Esophagus muscularis mucosa (tissue), 4 donors: ENCODE measurements at regions of chr9 and their contacts with region 1.

Region 1: DNA sequence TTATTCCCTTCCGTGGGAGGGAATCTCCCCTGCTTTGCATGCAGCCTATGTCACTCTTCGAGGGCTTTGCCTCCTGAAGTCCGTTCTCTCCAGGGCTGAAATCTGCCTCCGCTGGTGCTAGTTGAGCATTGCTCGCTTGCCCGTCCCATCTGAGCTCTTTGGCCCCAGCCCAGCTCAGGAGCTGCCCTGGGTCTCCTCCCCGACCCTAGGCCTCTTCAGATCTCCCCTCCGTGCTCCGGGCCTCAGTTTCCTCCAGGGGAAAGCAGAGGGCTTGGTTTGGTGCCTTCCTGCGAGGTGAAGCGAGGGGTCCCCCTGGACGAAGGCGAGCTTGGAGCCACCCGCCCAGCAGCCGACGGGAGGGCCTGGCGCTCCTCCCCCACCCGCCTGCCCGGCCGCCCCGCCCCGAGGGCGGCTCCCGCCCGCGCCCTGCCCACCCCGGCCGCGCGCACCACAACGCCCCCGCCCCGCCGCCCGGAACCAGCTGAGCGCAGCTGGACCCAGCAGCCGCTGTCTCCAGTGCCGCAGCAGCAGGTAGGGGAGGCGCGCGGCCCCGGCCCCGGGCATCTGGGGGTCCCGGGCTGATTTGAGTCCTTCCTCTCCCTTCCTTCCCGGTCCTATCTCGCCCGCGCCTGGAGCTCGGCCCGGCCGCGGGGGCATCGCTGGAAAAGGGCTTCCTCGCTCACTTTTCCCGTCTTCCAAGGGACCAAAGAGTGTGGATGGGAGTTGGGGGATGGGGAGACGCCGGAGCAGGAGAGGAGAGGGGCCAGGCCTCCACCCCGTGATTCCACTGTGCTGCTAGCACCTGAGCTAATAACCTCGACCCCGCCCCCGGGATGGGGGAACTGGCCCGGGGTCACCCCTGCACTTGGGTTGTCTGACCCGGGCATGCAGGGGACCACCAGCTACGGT is at the start of gene GSN:
- DNase-seq: no peak
- H3K4me3 ChIP-seq: peak within 1 kb of the TSS; percentile 79 to 94 (median 88)
- H3K27ac ChIP-seq: peak within 1 kb of the TSS; percentile 94 to 99 (median 96)
- H3K4me1 ChIP-seq: peaks cover 54 to 67% (median 64%) of the 10 kb centered on the region in 4 donors
- H3K27me3 ChIP-seq: no peaks in the 10 kb centered on the region
- CTCF ChIP-seq: peak in 1 of 3 experiments; percentile 34
- EP300 ChIP-seq: no peak
- POLR2A ChIP-seq: peak; percentile 67
- total RNA-seq, gene GSN: 2,509 to 3,811 (median 3,170) TPM

Region 2: GRCh38 chr9:120936011-120936763 is 331.8 kb before region 1 on chr9:
- intact Hi-C with region 1: no loop called
- DNase-seq: peak; percentile 99
- H3K4me3 ChIP-seq: peak overlapping the region; percentile 32 to 44 (median 37)
- H3K27ac ChIP-seq: peak overlapping the region; percentile 87 to 91 (median 90)
- H3K4me1 ChIP-seq: peaks cover 40 to 90% (median 76%) of the 10 kb centered on the region in 4 donors
- H3K27me3 ChIP-seq: no peaks in the 10 kb centered on the region
- CTCF ChIP-seq: peak; percentile 91 to 95 (median 95)
- EP300 ChIP-seq: no peak
- POLR2A ChIP-seq: no peak

Region 3: GRCh38 chr9:121201738-121202533 is 66.0 kb before region 1 on chr9 and contains the start of gene RAB14:
- intact Hi-C with region 1: no loop called
- DNase-seq: peak; percentile 100
- H3K4me3 ChIP-seq: peak within 1 kb of the TSS; percentile 92 to 97 (median 96)
- H3K27ac ChIP-seq: peak within 1 kb of the TSS; percentile 92 to 96 (median 94)
- H3K4me1 ChIP-seq: peaks cover 36 to 47% (median 44%) of the 10 kb centered on the region in 4 donors
- H3K27me3 ChIP-seq: no peaks in the 10 kb centered on the region
- CTCF ChIP-seq: peak; percentile 37 to 64 (median 58)
- EP300 ChIP-seq: no peak
- POLR2A ChIP-seq: no peak
- total RNA-seq, gene RAB14: 28.5 to 30.7 (median 29.5) TPM

Region 4: DNA sequence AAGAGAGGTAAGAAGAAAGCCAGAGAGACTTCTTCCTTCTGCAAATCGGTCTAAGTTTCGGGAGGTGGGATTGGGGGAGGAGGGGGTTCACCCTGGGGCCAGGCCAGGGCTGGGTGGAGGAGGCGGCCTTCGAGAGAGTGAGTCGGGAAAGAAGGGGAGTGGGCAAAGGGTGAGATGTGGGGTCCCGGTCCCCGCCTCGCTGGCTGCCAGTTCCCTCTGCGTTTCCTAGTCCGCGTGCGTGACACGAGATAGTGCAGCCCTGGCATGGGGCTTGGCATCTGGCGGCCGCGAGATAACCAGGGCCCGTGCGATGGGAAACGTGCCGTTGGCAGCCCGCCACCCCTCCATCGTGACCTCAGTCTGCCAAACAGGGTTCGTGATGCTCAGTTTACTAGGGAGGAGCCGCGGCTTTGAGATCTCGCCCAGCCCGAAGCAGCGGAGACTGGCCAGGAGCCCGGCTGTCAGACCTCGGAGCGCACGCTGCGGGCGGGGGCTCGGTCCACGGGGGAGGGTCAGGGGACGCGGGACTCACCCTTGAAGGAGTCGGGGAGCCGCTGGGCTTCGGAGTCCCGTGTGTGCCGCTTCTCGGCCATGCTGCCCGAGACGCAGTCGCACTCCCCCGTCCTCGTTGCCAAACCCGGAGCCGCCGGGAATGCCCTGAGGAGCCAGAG is 101.8 kb after region 1 on chr9 and contains the start of gene STOM:
- intact Hi-C with region 1: loop called (anchors 5 kb)
- DNase-seq: peak; percentile 97
- H3K4me3 ChIP-seq: peak within 1 kb of the TSS; percentile 74 to 87 (median 82)
- H3K27ac ChIP-seq: peak within 1 kb of the TSS; percentile 94 to 97 (median 96)
- H3K4me1 ChIP-seq: peaks cover 54 to 84% (median 77%) of the 10 kb centered on the region in 4 donors
- H3K27me3 ChIP-seq: no peaks in the 10 kb centered on the region
- CTCF ChIP-seq: peak in 1 of 3 experiments; percentile 6
- EP300 ChIP-seq: no peak
- POLR2A ChIP-seq: peak; percentile 99
- total RNA-seq, gene STOM: 250 to 554 (median 444) TPM

Region 5: DNA sequence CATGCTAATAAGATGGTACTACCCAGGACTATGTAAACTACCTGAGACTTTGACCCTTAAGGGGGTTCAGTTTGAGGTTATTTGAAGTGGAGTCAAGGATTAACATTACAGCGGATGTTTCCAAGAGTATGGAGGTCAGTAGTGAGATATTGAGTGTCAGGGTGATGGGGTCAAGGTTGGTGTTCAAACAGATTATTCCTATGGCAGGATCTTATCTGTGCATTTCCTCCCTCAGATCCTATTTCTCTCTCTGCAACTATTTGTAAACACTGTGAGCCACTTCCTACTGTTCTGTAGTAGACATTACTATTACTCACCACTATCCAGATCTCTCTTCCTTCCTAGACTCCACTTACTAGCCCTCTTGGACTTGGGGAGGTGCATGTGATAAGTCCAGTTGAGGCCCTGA is 156.1 kb after region 1 on chr9:
- intact Hi-C with region 1: no loop called
- DNase-seq: no peak
- H3K4me3 ChIP-seq: no peak overlapping the region
- H3K27ac ChIP-seq: no peak overlapping the region
- H3K4me1 ChIP-seq: no peaks in the 10 kb centered on the region
- H3K27me3 ChIP-seq: no peaks in the 10 kb centered on the region
- CTCF ChIP-seq: no peak
- EP300 ChIP-seq: no peak
- POLR2A ChIP-seq: no peak

Region 6: GRCh38 chr9:121498150-121498486 is 230.2 kb after region 1 on chr9:
- intact Hi-C with region 1: no loop called
- DNase-seq: no peak
- H3K4me3 ChIP-seq: peak overlapping the region; percentile 61 to 76 (median 66)
- H3K27ac ChIP-seq: peak overlapping the region in 3 of 4 donors; percentile 66 to 78 (median 77)
- H3K4me1 ChIP-seq: peaks cover 17 to 33% (median 27%) of the 10 kb centered on the region in 4 donors
- H3K27me3 ChIP-seq: no peaks in the 10 kb centered on the region
- CTCF ChIP-seq: peak; percentile 60 to 72 (median 62)
- EP300 ChIP-seq: no peak
- POLR2A ChIP-seq: no peak